Activated naive CD4-positive, alpha-beta T cell treated with anti-CD3 and anti-CD28 coated beads for 36 hours (primary cell): ENCODE measurements at regions of chr16 and their contacts with region 1.

Region 1: GRCh38 chr16:30472328-30472942 is at the start of gene ITGAL:
- DNase-seq: peak; percentile 95
- H3K4me3 Mint-ChIP-seq: peak within 1 kb of the TSS; percentile 92
- H3K27ac Mint-ChIP-seq: peak within 1 kb of the TSS; percentile 92
- H3K4me1 Mint-ChIP-seq: peaks cover 70% of the 10 kb centered on the region
- H3K27me3 Mint-ChIP-seq: no peaks in the 10 kb centered on the region
- total RNA-seq, gene ITGAL: 83.8 to 89.0 TPM

Region 2: DNA sequence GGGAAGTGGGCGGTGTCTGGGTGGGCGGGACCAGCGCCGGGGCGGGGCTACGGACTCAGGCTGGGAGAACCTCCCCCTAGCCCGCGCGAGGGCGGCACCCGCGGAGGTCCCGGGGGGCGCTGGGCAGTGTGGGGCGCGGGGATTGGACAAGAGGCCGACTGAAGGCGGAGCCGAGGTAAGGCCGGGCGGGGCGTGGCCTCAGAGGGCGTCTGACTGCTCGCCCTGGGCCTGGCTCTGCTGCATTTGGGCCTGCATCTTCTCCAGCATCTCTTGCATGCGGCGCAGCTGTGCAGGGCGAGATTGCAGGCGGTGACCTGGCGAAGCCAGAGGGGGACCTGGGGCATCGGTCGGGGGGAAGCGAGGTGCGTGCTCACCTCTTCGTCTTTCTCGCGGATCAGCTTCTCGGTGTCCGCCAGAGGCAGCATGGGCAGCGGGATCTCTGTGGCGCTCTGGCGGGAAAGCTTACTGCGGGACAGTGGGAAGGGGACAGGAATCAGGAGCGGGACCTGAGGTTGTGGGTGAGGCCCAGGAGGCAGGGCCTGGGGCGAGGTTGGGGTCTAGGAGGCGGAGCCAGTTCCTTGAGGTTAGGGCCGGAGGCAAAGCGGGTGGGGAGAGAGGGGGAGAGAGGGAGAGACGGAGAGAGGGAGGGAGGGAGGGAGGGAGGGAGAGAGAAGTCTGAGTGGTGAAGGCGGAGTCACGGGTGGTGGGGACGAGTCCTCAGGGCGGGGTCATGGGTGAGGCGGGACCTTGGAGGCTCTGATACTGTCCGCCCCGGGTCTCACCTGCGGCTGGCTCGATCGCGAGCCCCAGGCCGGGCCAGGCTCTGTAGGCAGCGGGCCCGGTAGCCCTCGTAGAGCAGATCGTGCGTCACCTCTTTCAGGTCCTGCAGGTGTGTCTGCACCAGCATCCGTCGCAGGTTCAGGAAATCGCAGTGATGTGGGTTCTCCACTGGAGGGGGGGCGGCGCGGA is 93.9 kb before region 1 on chr16:
- CTCF ChIA-PET with region 1: no interaction called
- intact Hi-C with region 1: loop called (anchors 5 kb)
- DNase-seq: peak; percentile 100
- H3K4me3 Mint-ChIP-seq: peak overlapping the region; percentile 99
- H3K27ac Mint-ChIP-seq: peak overlapping the region; percentile 99
- H3K4me1 Mint-ChIP-seq: peaks cover 43% of the 10 kb centered on the region
- H3K27me3 Mint-ChIP-seq: no peaks in the 10 kb centered on the region

Region 3: DNA sequence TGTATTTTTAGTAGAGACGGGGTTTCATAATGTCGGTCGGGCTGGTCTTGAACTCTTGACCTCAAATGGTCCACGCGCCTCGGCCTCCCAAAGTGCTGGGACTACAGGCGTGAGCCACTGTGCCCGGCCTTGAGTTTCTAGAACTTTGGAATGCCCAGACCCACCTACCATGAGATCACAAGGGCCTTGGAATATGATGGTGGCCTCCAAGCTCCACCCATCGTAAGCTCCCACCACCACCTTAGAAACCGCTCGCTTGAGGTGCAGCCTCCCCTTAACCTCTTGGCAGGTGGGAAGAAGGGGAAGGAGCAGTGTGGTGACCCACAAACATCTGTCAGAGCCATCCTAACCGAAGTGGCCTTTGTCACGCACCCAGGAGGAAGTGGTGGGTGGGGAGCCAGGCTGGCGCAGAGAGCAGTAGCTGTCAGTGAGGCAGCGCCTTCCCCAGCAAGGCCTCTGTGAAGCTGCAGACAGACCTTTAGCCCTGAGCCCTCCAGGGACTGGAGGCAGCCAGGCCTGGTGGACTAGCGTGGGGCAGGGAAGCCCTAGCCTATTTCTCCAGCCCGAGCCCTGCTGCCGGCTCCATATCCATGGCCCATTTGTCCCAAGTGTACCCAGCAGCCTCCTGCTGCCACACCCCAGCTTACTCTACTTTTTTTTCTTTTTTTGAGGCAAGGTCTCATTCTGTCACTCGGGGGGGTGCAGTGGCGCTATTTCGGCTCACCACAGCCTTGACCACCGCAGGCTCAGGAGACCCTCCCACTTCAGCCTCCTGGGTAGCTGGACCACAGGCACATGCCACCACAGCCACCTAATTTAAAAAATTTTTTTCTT is 13.7 kb before region 1 on chr16:
- CTCF ChIA-PET with region 1: interaction called, 11 read pairs
- intact Hi-C with region 1: loop called (anchors 1 kb)
- DNase-seq: peak; percentile 95
- H3K4me3 Mint-ChIP-seq: peak overlapping the region; percentile 54
- H3K27ac Mint-ChIP-seq: peak overlapping the region; percentile 92
- H3K4me1 Mint-ChIP-seq: peaks cover 46% of the 10 kb centered on the region
- H3K27me3 Mint-ChIP-seq: no peaks in the 10 kb centered on the region

Region 4: GRCh38 chr16:30491744-30492308 is 19.4 kb after region 1 on chr16:
- CTCF ChIA-PET with region 1: interaction called, 6 read pairs
- intact Hi-C with region 1: loop called (anchors 1 kb)
- DNase-seq: peak; percentile 65
- H3K4me3 Mint-ChIP-seq: no peak overlapping the region
- H3K27ac Mint-ChIP-seq: peak overlapping the region; percentile 59
- H3K4me1 Mint-ChIP-seq: peaks cover 29% of the 10 kb centered on the region
- H3K27me3 Mint-ChIP-seq: no peaks in the 10 kb centered on the region

Region 5: GRCh38 chr16:30526823-30527635 is 54.6 kb after region 1 on chr16:
- CTCF ChIA-PET with region 1: interaction called, 3 read pairs
- intact Hi-C with region 1: loop called (anchors 1 kb)
- DNase-seq: peak; percentile 97
- H3K4me3 Mint-ChIP-seq: peak overlapping the region; percentile 72
- H3K27ac Mint-ChIP-seq: peak overlapping the region; percentile 75
- H3K4me1 Mint-ChIP-seq: peaks cover 36% of the 10 kb centered on the region
- H3K27me3 Mint-ChIP-seq: no peaks in the 10 kb centered on the region

Region 6: DNA sequence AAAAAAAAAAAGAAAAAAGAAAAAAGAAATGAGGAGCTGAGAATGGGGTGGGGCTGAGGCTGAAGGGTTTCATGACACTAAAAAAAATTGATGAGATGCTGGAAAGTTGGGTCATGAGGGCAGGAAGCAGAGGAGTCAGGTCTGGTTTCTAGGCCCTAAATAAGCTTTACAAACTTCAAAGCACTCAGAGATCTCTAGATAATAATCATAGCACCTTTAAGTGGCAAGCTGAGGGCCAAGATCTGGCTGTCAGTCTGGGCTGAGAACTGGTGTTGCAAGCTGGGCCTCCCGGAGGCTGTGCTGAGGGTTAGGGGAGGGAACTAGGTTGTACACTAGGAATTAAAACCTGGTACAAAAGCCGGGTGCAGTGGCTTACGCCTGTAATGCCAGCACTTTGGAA is 79.3 kb after region 1 on chr16:
- CTCF ChIA-PET with region 1: interaction called, 3 read pairs
- intact Hi-C with region 1: loop called (anchors 5 kb)
- DNase-seq: peak; percentile 74
- H3K4me3 Mint-ChIP-seq: peak overlapping the region; percentile 21
- H3K27ac Mint-ChIP-seq: peak overlapping the region; percentile 94
- H3K4me1 Mint-ChIP-seq: peaks cover 57% of the 10 kb centered on the region
- H3K27me3 Mint-ChIP-seq: no peaks in the 10 kb centered on the region

Region 7: GRCh38 chr16:30585400-30586189 is 113.2 kb after region 1 on chr16 and contains the start of gene ZNF785:
- CTCF ChIA-PET with region 1: no interaction called
- intact Hi-C with region 1: loop called (anchors 1 kb)
- DNase-seq: peak; percentile 98
- H3K4me3 Mint-ChIP-seq: peak within 1 kb of the TSS; percentile 90
- H3K27ac Mint-ChIP-seq: peak within 1 kb of the TSS; percentile 90
- H3K4me1 Mint-ChIP-seq: peaks cover 32% of the 10 kb centered on the region
- H3K27me3 Mint-ChIP-seq: no peaks in the 10 kb centered on the region
- total RNA-seq, gene ZNF785: 11.9 to 13.2 TPM